ENCODE measurements at regions of chr7 and their contacts with region 1.

Region 1: DNA sequence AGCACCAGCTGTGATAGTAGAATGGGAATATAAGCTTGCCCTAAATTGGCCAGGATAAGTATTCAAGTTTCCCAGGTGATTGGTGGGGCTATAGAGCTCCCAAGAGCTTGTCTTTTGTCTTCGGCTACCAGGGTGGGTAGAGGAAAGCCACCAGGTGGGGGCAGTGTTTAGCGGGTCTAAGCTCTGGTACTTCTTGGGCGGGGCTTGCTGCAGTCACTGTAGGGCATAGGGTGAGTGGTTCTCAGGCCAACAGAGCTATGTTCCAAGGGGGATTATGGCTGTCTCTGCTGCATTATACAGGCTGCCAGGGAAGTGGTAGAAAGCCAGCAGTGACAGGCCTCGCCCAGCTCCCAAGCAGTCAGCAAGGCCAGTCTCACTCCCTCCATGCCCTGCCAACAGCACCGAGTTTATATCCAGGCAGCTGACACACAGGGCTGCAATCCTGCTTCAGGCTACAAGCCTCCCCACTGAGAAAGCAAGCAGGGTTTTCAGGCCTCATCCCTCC is 110.7 kb downstream of the ZNF467 start:
- DNase-seq: peak; percentile 79 to 91 (median 84)
- ATAC-seq: peak; percentile 100
- H3K4me3 ChIP-seq: no peak overlapping the region
- H3K27ac ChIP-seq: no peak overlapping the region
- H3K4me1 ChIP-seq: no peaks in the 10 kb centered on the region
- H3K27me3 ChIP-seq: peaks cover 0 to 10% of the 10 kb centered on the region in 2 experiments; a peak in 2 of 5 replicates
- CTCF ChIP-seq: peak; percentile 95 to 98 (median 96)
- EP300 ChIP-seq: no peak
- POLR2A ChIP-seq: no peak
- RAD21 ChIP-seq: peak; percentile 85 to 96

Region 2: DNA sequence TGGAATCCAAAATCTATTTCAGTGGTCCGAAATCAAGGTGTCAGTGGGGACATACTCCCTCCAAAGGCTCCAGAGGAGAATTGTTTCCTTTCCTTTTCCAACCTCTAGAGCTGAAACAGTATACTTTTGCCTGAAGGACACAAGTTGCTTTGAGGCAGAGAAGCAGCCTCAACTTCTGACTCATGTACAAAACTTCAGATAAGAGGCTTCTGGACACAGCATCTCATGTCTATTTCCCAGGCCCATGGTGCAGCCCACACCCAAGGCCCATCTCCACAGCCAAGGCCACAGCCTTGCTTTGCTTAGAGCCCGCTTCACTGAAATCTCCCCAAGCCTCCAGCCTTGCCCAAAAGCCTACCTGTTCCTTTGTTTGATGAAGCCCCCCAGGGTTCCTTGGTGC is 41.9 kb after region 1 on chr7:
- CTCF ChIA-PET with region 1: interaction called, 3 read pairs
- POLR2A ChIA-PET with region 1: no interaction called
- in situ Hi-C with region 1: no loop called
- intact Hi-C with region 1: loop called (anchors 5 kb)
- DNase-seq: peak in 2 of 4 experiments; percentile 8 to 47
- ATAC-seq: peak; percentile 44; the same call in 2 of the 3 replicates
- H3K4me3 ChIP-seq: no peak overlapping the region
- H3K27ac ChIP-seq: no peak overlapping the region
- H3K4me1 ChIP-seq: peaks cover 7 to 12% of the 10 kb centered on the region in 2 experiments; a peak in 3 of 5 replicates
- H3K27me3 ChIP-seq: peaks cover 3 to 7% of the 10 kb centered on the region in 2 experiments; a peak in 1 of 5 replicates
- CTCF ChIP-seq: 0 out of 6 replicates have a peak, but pooled peaks of 1 of the 3 experiments have one; percentile 12
- EP300 ChIP-seq: no peak
- POLR2A ChIP-seq: no peak
- RAD21 ChIP-seq: no peak

Region 3: DNA sequence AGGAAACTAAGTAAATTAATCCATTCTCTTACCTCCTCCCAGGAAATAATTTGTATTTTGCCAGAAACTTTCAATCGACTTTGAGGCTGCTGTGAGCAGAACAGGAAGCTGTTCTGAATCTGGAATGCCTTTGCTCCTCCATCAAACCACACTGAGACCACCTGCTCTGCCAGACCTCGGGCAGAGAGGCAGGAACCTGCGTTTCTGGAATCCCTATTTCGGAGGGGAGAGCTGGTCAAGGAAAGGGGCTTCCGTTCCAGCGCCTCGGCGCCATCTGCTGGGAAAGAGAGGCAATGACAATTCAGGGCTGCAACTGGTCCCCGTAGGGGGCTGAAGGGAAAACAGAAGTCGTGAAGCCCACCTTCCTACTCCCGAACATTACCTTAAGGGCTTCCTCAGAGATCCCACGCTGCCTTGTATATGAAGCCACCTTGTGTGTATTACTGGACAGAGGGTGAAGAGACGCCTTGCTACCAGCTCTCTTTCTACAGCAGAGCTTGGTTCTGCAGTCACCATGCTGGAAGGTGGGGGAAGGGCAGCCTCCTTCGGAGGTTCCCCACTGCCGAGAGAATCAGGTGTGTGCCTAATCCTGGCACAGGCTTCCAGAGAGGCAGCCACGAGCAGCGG is 79.5 kb after region 1 on chr7:
- CTCF ChIA-PET with region 1: interaction called, 23 read pairs
- POLR2A ChIA-PET with region 1: interaction called, 10 read pairs
- in situ Hi-C with region 1: loop called (anchors 5 kb)
- intact Hi-C with region 1: loop called (anchors 1 kb)
- DNase-seq: peak; percentile 89 to 92 (median 91)
- ATAC-seq: peak; percentile 96
- H3K4me3 ChIP-seq: no peak overlapping the region
- H3K27ac ChIP-seq: no peak overlapping the region
- H3K4me1 ChIP-seq: peaks cover 4 to 7% of the 10 kb centered on the region in 2 experiments; a peak in 4 of 5 replicates
- H3K27me3 ChIP-seq: peaks cover 10 to 18% of the 10 kb centered on the region in 2 experiments
- CTCF ChIP-seq: peak; percentile 96 to 99 (median 97)
- EP300 ChIP-seq: peak; percentile 31
- POLR2A ChIP-seq: no peak
- RAD21 ChIP-seq: peak; percentile 94 to 99

Region 4: DNA sequence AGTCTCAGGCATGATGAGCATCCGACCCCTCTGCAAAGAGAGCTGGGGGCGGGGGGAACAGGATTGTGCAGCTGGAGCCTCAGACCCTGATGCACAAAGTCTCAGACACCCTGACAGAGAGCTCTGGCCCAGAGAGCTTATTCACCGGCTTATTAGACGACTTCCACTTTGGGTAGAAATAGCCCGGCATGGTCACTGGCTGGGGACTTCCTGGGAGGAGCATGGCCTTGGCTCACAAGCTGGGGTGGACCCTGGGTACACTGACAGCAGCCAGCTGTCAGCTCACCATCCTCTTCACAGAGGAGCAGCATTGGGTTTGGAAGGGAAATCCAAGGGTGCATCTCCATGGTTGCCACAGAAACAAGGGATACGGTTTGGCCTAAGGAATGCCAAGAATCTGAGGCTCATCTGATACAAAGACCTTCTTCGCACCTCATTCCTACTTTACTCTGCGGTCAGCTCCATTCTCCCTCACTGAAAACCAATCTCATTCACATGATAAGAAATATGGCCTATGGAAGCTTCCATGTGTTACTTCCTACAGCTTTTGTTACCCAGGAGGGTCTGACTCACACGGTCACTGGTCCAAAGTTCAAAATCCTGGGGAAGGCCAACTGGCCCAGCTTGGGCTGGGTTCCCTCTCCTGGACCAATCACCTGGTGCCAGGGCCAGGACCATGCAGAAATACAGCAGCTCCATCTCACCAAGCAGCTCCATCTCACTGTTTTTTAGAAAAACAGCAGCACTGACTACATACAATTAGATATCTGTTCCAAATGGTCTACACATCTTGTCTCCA is 85.6 kb after region 1 on chr7:
- CTCF ChIA-PET with region 1: interaction called, 23 read pairs
- POLR2A ChIA-PET with region 1: interaction called, 3 read pairs
- in situ Hi-C with region 1: loop called (anchors 5 kb)
- intact Hi-C with region 1: no loop called
- DNase-seq: no peak
- ATAC-seq: peak; percentile 18; the same call in 2 of the 3 replicates
- H3K4me3 ChIP-seq: no peak overlapping the region
- H3K27ac ChIP-seq: no peak overlapping the region
- H3K4me1 ChIP-seq: peaks cover 0 to 5% of the 10 kb centered on the region in 2 experiments; a peak in 1 of 5 replicates
- H3K27me3 ChIP-seq: peaks cover 15 to 27% of the 10 kb centered on the region in 2 experiments
- CTCF ChIP-seq: no peak
- EP300 ChIP-seq: no peak
- POLR2A ChIP-seq: no peak
- RAD21 ChIP-seq: no peak

Region 5: DNA sequence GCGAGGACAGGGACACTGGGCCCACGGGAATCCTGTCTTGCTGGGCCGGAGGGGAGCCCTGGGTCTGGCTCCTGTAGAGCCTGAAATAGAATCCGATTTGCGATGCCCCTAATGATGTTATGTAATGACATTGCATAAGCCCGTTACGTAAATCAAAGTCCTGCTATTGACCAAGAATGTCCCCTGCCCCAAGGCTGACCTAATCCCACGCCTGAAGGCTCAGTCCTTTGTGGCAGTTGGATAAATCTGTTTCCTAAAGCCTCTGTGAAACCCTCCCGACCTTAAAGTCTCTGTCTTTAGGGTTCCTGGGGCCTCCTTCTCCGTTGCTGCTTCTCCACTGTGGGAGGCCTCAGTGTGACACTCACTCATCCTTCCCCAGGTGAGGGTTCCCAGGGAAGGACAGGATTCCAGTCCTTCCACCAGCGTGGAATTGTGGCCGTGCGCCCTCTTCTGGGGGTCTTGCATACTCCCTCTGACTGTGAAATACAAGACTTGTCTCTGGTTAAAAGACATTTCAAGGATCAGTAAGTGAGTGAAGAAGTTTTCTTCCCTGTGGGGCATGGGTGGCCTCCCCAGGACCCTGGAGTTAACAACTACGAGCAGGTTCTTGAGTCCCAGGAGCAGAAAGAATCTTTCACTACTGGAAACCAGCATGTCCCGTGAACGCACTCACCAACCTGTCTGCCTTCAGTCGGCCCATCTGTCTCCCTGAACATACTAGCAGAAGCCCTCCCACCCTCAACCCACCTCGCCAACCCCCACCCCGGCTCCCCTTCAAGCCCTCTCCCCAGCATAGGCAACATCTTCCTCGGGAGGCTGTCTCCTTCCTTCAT is 91.0 kb after region 1 on chr7:
- CTCF ChIA-PET with region 1: interaction called, 14 read pairs
- POLR2A ChIA-PET with region 1: interaction called, 3 read pairs
- in situ Hi-C with region 1: loop called (anchors 5 kb)
- intact Hi-C with region 1: no loop called
- DNase-seq: peak; percentile 70 to 80 (median 75)
- ATAC-seq: peak; percentile 89
- H3K4me3 ChIP-seq: no peak overlapping the region
- H3K27ac ChIP-seq: no peak overlapping the region
- H3K4me1 ChIP-seq: peaks cover 3 to 12% of the 10 kb centered on the region in 2 experiments; a peak in 4 of 5 replicates
- H3K27me3 ChIP-seq: peaks cover 3% of the 10 kb centered on the region in 2 experiments; a peak in 1 of 5 replicates
- CTCF ChIP-seq: peak; percentile 88 to 96 (median 89)
- EP300 ChIP-seq: no peak
- POLR2A ChIP-seq: no peak
- RAD21 ChIP-seq: peak; percentile 55 to 83

Region 6: DNA sequence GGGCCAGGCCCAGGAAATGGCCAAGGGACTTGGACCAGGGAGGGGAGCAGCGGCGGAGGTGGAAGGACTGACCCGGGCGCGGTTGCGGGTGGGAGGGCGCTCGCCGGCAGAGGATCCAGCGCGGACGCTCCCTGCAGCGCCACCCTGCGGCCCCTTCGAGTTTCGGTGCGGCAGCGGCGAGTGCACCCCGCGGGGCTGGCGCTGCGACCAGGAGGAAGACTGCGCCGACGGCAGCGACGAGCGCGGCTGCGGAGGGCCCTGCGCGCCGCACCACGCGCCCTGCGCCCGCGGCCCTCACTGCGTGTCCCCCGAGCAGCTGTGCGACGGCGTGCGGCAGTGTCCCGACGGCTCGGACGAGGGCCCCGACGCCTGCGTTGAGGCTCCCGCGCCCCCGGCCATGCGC is 127.5 kb after region 1 on chr7:
- CTCF ChIA-PET with region 1: interaction called, 13 read pairs
- POLR2A ChIA-PET with region 1: interaction called, 6 read pairs
- in situ Hi-C with region 1: no loop called
- intact Hi-C with region 1: loop called (anchors 1 kb)
- DNase-seq: peak; percentile 85 to 93 (median 90)
- ATAC-seq: peak; percentile 87
- H3K4me3 ChIP-seq: no peak overlapping the region
- H3K27ac ChIP-seq: no peak overlapping the region
- H3K4me1 ChIP-seq: peaks cover 4 to 76% of the 10 kb centered on the region in 2 experiments; a peak in 4 of 5 replicates
- H3K27me3 ChIP-seq: peaks cover 7 to 65% of the 10 kb centered on the region in 2 experiments; a peak in 4 of 5 replicates
- CTCF ChIP-seq: peak; percentile 71 to 98 (median 95)
- EP300 ChIP-seq: no peak
- POLR2A ChIP-seq: no peak
- RAD21 ChIP-seq: peak; percentile 55 to 75

Measured in K562 (cell line).